H1 (cell line): ENCODE measurements at regions of chr13 and their contacts with region 1.

Region 1: GRCh38 chr13:52862358-52863206 is 14.1 kb upstream of the PCDH8 start:
- DNase-seq: peak in 1 of 2 experiments; percentile 89
- H3K4me3 ChIP-seq: no peak overlapping the region
- H3K27ac ChIP-seq: no peak overlapping the region
- H3K4me1 ChIP-seq: peaks cover 0 to 4% (median 2%) of the 10 kb centered on the region in 4 experiments; a peak in 2 of 7 replicates
- H3K27me3 ChIP-seq: no peaks in the 10 kb centered on the region
- CTCF ChIP-seq: peak; percentile 22 to 80 (median 78)
- EP300 ChIP-seq: no peak
- POLR2A ChIP-seq: no peak
- RAD21 ChIP-seq: peak; percentile 65 to 75

Region 2: DNA sequence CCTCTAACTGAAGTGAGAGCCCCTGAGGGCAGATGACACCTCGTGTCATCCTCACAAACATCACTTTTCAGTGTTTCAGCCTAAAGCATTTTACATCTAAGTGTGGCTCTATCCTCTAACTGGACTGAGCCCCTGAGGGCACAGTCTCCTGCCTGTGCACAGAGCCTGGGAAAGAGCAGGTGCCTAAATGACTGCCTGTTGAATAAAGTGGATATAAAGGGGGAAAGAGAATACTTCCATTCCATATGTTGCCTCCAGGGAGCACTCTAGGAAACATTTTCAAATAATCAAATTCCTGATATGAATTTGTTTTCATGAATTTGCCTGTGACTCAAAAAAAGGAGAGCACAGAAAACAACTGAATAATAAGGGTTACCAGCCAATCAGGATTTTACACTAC is 155.2 kb before region 1 on chr13:
- CTCF ChIA-PET with region 1: no interaction called
- POLR2A ChIA-PET with region 1: no interaction called
- DNase-seq: no peak
- H3K4me3 ChIP-seq: no peak overlapping the region
- H3K27ac ChIP-seq: no peak overlapping the region
- H3K4me1 ChIP-seq: peaks cover 2 to 5% (median 3%) of the 10 kb centered on the region in 4 experiments; a peak in 5 of 7 replicates
- H3K27me3 ChIP-seq: no peaks in the 10 kb centered on the region
- CTCF ChIP-seq: peak in 1 of 3 experiments; percentile 24; a peak in 1 of 4 replicates
- EP300 ChIP-seq: no peak
- POLR2A ChIP-seq: no peak
- RAD21 ChIP-seq: no peak

Region 3: DNA sequence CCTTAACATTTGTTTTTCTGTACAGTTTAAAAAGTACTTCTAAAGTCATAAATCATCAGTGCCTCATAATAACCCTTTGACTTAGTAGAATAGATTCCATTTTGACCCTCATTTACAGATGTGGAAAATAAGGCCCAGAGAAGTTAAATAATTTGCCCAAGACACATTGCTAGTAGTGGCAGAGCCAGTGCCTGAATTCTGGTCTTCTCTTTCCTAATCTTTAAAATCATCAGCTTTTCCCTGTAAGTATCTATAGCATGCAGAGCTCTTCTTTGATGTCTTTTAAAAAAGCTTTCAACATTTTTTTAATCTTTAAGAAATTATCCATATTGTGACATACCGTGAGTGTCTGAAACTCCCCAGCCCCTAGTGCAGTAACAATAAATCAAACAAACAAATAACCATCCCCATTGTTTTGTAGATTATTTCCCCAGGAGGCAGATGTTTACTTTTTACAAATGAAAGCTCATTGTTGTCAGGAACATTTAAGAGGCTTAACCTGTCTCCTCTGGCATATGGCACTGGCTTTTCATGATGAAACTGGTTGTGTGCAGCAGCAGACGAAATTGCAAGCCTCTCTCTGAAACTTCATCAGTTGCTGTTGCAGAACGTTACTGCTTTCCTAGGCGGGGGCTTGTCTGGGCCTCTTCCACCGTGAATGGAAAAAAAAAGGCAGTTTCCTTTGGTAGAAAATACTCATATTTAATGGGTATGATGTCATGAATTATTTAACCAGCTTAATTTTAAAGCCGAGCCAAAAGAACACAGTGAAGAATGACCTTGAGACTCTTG is 17.6 kb after region 1 on chr13:
- CTCF ChIA-PET with region 1: interaction called, 177 read pairs
- POLR2A ChIA-PET with region 1: interaction called, 4 read pairs
- DNase-seq: peak in 1 of 2 experiments; percentile 29
- H3K4me3 ChIP-seq: peak overlapping the region in 1 of 4 experiments; percentile 44; a peak in 2 of 8 replicates
- H3K27ac ChIP-seq: no peak overlapping the region
- H3K4me1 ChIP-seq: peaks cover 8 to 25% (median 21%) of the 10 kb centered on the region in 4 experiments
- H3K27me3 ChIP-seq: peaks cover 6 to 27% (median 23%) of the 10 kb centered on the region in 4 experiments
- CTCF ChIP-seq: no peak
- EP300 ChIP-seq: peak in 1 of 2 experiments; percentile 89; a peak in 1 of 3 replicates
- POLR2A ChIP-seq: no peak
- RAD21 ChIP-seq: no peak

Region 4: DNA sequence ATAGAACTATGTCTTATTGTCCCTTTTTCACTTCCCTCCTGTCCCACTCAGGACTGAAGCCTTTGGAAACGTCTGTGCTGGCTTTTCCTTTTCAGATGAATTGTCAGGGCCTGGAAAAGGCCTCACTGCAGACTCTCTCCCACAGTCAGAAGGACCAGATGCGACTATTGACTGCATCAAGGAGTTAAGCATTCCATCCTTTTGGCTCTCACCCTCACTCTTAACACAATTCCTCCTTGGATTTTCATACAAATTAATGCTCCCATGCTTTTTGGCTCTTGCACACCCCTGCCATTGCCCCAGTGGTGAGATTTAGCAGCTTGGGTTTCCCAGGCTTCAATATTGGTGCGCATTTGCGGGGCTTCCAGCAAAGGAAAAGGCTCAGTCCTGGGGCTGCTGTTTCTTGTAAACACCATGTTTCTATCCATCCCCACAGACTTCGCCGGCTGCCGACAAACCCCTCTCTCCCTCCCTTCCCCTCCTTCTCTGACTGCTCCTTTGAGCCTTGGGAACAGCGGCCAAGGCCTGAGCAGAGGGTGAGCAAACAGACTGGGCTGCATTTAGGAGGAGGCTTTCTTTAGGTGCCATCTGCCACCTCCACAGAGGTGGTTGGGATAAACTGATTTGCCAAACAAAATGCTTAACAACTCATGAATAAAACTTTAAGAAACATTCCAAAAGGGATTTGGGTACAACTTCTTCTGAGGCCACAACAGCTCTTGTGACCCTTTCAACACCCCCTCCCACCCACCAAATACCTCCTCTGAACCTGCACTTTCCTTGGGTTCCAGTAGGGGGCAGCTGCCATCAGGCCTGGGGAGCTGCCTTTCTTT is 34.5 kb after region 1 on chr13:
- CTCF ChIA-PET with region 1: interaction called, 21 read pairs
- POLR2A ChIA-PET with region 1: no interaction called
- DNase-seq: peak in 1 of 2 experiments; percentile 82
- H3K4me3 ChIP-seq: no peak overlapping the region; a peak in 1 of 8 replicates
- H3K27ac ChIP-seq: no peak overlapping the region
- H3K4me1 ChIP-seq: peaks cover 0 to 25% (median 5%) of the 10 kb centered on the region in 4 experiments; a peak in 4 of 7 replicates
- H3K27me3 ChIP-seq: no peaks in the 10 kb centered on the region; a peak in 1 of 7 replicates
- CTCF ChIP-seq: peak; percentile 70 to 75 (median 73)
- EP300 ChIP-seq: no peak
- POLR2A ChIP-seq: no peak
- RAD21 ChIP-seq: peak; percentile 67 to 68

Region 5: DNA sequence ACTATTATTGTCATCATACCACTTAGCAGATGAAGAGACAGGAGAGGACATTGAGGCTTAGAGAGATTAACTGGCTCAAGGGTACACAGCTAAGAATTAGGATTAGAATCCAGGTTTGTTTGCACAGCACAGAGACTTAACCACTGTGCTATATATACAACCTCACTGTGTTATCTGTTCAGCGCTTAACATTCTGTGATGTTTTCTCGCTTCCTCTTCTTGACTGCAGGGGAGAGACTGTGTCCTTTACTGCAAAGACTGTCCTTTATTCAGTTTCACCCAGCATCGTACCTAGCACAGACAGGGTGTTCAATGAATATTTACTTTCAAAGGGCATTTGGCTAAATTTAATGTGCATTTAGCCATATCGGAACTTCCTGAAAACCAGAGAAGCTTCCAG is 40.7 kb after region 1 on chr13:
- CTCF ChIA-PET with region 1: interaction called, 21 read pairs
- POLR2A ChIA-PET with region 1: no interaction called
- DNase-seq: no peak
- H3K4me3 ChIP-seq: no peak overlapping the region
- H3K27ac ChIP-seq: no peak overlapping the region
- H3K4me1 ChIP-seq: peaks cover 9 to 45% (median 32%) of the 10 kb centered on the region in 4 experiments
- H3K27me3 ChIP-seq: no peaks in the 10 kb centered on the region; a peak in 1 of 7 replicates
- CTCF ChIP-seq: no peak
- EP300 ChIP-seq: no peak
- POLR2A ChIP-seq: no peak
- RAD21 ChIP-seq: no peak

Region 6: DNA sequence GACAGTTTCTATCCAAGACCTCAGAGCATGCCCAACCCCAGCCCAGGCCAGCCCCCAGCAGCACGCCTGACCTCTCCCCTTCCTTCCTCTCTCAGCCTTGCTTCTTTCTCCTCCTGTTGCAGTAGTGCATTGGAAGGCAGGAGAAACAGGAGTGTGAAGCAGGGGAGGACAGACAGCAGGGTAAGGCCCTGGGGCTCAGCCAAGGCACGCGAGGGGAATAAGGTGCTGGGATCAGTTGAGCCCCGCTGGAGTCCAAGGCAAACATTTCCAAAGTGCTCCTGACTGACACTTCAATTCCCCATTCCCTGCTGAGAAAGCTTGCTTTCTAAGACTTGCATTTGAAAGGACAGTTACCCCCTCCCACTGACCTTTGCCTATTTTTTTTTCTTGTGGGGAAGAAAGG is 92.9 kb after region 1 on chr13:
- CTCF ChIA-PET with region 1: interaction called, 22 read pairs
- POLR2A ChIA-PET with region 1: no interaction called
- DNase-seq: peak; percentile 46 to 66
- H3K4me3 ChIP-seq: peak overlapping the region in 1 of 4 experiments; percentile 46; a peak in 3 of 8 replicates
- H3K27ac ChIP-seq: no peak overlapping the region
- H3K4me1 ChIP-seq: peaks cover 7 to 23% (median 16%) of the 10 kb centered on the region in 4 experiments; a peak in 6 of 7 replicates
- H3K27me3 ChIP-seq: peaks cover 0 to 2% (median 0%) of the 10 kb centered on the region in 4 experiments; a peak in 3 of 7 replicates
- CTCF ChIP-seq: no peak
- EP300 ChIP-seq: peak in 1 of 2 experiments; percentile 41; a peak in 1 of 3 replicates
- POLR2A ChIP-seq: no peak
- RAD21 ChIP-seq: 0 out of 4 replicates have a peak, but pooled peaks of 1 of the 2 experiments have one; percentile 2